ENCODE measurements at regions of chr11 and their contacts with region 1.

Region 1: GRCh38 chr11:125625630-125626287 is 796 bp downstream of the CHEK1 start:
- DNase-seq: peak; percentile 93 to 95
- ATAC-seq: peak; percentile 96
- H3K4me3 ChIP-seq: peak overlapping the region; percentile 45 to 62
- H3K27ac ChIP-seq: peak overlapping the region; percentile 20 to 57
- H3K4me1 ChIP-seq: peaks cover 5 to 6% of the 10 kb centered on the region in 2 donors
- H3K27me3 ChIP-seq: no peaks in the 10 kb centered on the region

Region 2: GRCh38 chr11:125679397-125679796 is 53.6 kb after region 1 on chr11:
- intact Hi-C with region 1: no loop called
- DNase-seq: no peak
- ATAC-seq: no peak
- H3K4me3 ChIP-seq: no peak overlapping the region
- H3K27ac ChIP-seq: no peak overlapping the region
- H3K4me1 ChIP-seq: no peaks in the 10 kb centered on the region
- H3K27me3 ChIP-seq: no peaks in the 10 kb centered on the region

Region 3: GRCh38 chr11:125887373-125888324 is 261.9 kb after region 1 on chr11 and contains the start of gene HYLS1:
- intact Hi-C with region 1: loop called (anchors 10 kb)
- DNase-seq: peak; percentile 96 to 98
- ATAC-seq: peak; percentile 99
- H3K4me3 ChIP-seq: peak within 1 kb of the TSS; percentile 79 to 93
- H3K27ac ChIP-seq: peak within 1 kb of the TSS; percentile 15 to 86
- H3K4me1 ChIP-seq: no peaks in the 10 kb centered on the region
- H3K27me3 ChIP-seq: no peaks in the 10 kb centered on the region
- total RNA-seq, gene HYLS1: 3.3 to 3.6 TPM

Region 4: GRCh38 chr11:126624506-126624905 is 998.7 kb after region 1 on chr11:
- intact Hi-C with region 1: no loop called
- DNase-seq: no peak
- ATAC-seq: no peak
- H3K4me3 ChIP-seq: no peak overlapping the region
- H3K27ac ChIP-seq: no peak overlapping the region
- H3K4me1 ChIP-seq: no peaks in the 10 kb centered on the region
- H3K27me3 ChIP-seq: no peaks in the 10 kb centered on the region

Measured in aorta (tissue), 5 donors.